Left cardiac atrium (tissue), 4 donors: ENCODE measurements at regions of chr21 and their contacts with region 1.

Region 1: GRCh38 chr21:32834916-32835235 is 63.3 kb upstream of the PAXBP1 start:
- DNase-seq: no peak
- ATAC-seq: no peak

Region 2: DNA sequence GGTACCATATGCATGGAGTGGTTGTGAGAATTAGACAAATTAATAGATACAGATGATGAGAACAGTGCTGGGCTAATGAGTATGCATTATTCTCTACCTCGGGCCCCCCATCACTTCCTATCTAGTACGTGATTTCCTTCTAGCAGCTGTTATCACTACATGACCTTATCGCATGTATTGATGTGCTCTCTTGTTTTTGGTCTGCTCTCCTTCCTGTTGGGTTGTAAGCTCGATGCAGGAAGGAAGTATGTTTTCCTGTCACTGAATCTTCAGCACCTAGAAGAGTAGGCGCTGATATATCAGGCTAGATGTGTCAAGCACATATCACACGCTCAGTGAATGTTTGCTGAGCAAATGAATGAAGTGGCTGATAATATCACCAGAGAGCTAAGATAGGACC is 351.0 kb after region 1 on chr21:
- intact Hi-C with region 1: loop called in 1 of 2 experiments (anchors 10 kb)
- DNase-seq: no peak
- ATAC-seq: peak in 1 of 2 donors; percentile 15

Region 3: DNA sequence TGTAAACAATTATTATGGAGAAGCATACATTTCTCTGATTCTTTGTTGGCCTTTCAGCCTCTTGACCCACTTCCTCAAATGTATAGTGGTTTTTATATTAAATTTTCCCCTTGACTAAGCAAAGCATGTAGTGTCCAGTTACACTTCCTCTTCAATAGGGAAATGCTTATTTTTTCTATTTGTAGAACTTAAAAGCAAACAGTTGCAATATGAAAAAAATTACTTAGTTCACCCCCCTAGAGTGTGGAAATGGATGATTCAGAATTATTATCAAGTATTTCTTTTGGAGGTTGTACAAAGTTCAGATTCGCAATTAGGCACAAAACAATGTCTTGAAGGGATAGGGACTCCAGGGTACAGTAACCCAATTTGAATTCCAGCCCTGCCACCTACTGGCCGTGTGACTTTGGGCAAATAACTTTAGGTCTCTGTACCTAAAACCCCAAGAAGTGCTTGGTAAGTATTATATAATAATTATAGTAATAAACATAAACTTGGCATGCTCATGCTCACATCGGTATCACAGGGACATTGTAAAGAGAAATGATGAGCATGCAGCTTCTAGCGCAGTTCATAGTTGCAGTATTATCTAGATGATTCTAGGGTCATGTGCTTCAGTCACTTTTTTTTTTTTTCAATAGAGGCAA is 539.7 kb after region 1 on chr21:
- intact Hi-C with region 1: loop called in 1 of 2 experiments (anchors 10 kb)
- DNase-seq: peak; percentile 58
- ATAC-seq: peak; percentile 81 to 90